Natural killer cell (primary cell): ENCODE measurements at regions of chr6 and their contacts with region 1.

Region 1: GRCh38 chr6:158168040-158168289 is at the start of gene SERAC1:
- DNase-seq: no peak
- ATAC-seq: peak; percentile 47 to 69 (median 59)
- H3K4me3 ChIP-seq: peak within 1 kb of the TSS; percentile 93
- H3K4me3 Mint-ChIP-seq: peak within 1 kb of the TSS; percentile 97
- H3K27ac ChIP-seq: peak within 1 kb of the TSS; percentile 99
- H3K27ac Mint-ChIP-seq: peak within 1 kb of the TSS; percentile 93 to 97
- H3K4me1 ChIP-seq: peaks cover 14% of the 10 kb centered on the region
- H3K4me1 Mint-ChIP-seq: peaks cover 10 to 13% of the 10 kb centered on the region in 2 donors
- H3K27me3 ChIP-seq: no peaks in the 10 kb centered on the region
- H3K27me3 Mint-ChIP-seq: peaks cover 0 to 3% of the 10 kb centered on the region in 2 donors
- CTCF ChIP-seq: no peak
- total RNA-seq, gene SERAC1: 2.1 to 3.0 (median 2.3) TPM

Region 2: GRCh38 chr6:158853072-158853871 is 685.3 kb after region 1 on chr6:
- intact Hi-C with region 1: loop called (anchors 5 kb)
- DNase-seq: peak; percentile 77 to 93
- ATAC-seq: peak; percentile 65 to 86 (median 73)
- H3K4me3 ChIP-seq: peak overlapping the region; percentile 22
- H3K4me3 Mint-ChIP-seq: no peak overlapping the region
- H3K27ac ChIP-seq: peak overlapping the region; percentile 91
- H3K27ac Mint-ChIP-seq: no peak overlapping the region
- H3K4me1 ChIP-seq: peaks cover 64% of the 10 kb centered on the region
- H3K4me1 Mint-ChIP-seq: peaks cover 25 to 27% of the 10 kb centered on the region in 2 donors
- H3K27me3 ChIP-seq: no peaks in the 10 kb centered on the region
- H3K27me3 Mint-ChIP-seq: no peaks in the 10 kb centered on the region
- CTCF ChIP-seq: no peak

Region 3: DNA sequence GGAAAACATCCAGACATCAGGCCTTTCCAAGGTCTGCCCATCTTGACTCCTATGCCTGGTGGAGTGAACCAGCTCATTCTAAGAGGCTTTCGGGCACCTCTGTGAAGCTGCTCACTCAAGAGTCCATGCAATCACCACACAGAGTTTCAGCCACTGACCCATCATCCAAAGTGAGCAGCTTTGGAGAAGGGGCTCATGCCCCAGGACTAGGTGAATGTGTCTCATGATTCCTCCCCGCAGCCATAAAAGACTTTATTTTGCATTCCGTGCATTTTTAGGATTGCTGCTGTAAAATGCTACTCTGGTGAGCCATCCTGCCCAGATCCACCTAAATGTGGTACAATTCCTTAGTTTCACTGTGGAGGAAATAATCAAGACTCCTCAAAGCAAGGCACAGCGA is 695.7 kb after region 1 on chr6:
- intact Hi-C with region 1: no loop called
- DNase-seq: no peak
- ATAC-seq: no peak
- H3K4me3 ChIP-seq: no peak overlapping the region
- H3K4me3 Mint-ChIP-seq: no peak overlapping the region
- H3K27ac ChIP-seq: no peak overlapping the region
- H3K27ac Mint-ChIP-seq: no peak overlapping the region
- H3K4me1 ChIP-seq: peaks cover 12% of the 10 kb centered on the region
- H3K4me1 Mint-ChIP-seq: peaks cover 11 to 16% of the 10 kb centered on the region in 2 donors
- H3K27me3 ChIP-seq: no peaks in the 10 kb centered on the region
- H3K27me3 Mint-ChIP-seq: peaks cover 0 to 3% of the 10 kb centered on the region in 2 donors
- CTCF ChIP-seq: no peak